ENCODE measurements at regions of chr1 and their contacts with region 1.

Region 1: GRCh38 chr1:160251687-160252526 is 10.4 kb downstream of the DCAF8 start:
- DNase-seq: peak; percentile 17 to 76 (median 57)
- ATAC-seq: peak; percentile 99
- H3K4me3 ChIP-seq: no peak overlapping the region
- H3K4me3 Mint-ChIP-seq: no peak overlapping the region
- H3K27ac ChIP-seq: no peak overlapping the region
- H3K27ac Mint-ChIP-seq: peak overlapping the region; percentile 80
- H3K4me1 ChIP-seq: no peaks in the 10 kb centered on the region
- H3K4me1 Mint-ChIP-seq: peaks cover 23% of the 10 kb centered on the region
- H3K27me3 ChIP-seq: no peaks in the 10 kb centered on the region
- H3K27me3 Mint-ChIP-seq: no peaks in the 10 kb centered on the region
- CTCF ChIP-seq: peak; percentile 64

Region 2: GRCh38 chr1:159936273-159936904 is 315.5 kb before region 1 on chr1:
- CTCF ChIA-PET with region 1: no interaction called
- POLR2A ChIA-PET with region 1: no interaction called
- intact Hi-C with region 1: loop called in 1 of 2 experiments (anchors 5 kb)
- DNase-seq: peak; percentile 66 to 90 (median 82)
- ATAC-seq: peak; percentile 96
- H3K4me3 ChIP-seq: no peak overlapping the region
- H3K4me3 Mint-ChIP-seq: no peak overlapping the region
- H3K27ac ChIP-seq: no peak overlapping the region
- H3K27ac Mint-ChIP-seq: no peak overlapping the region
- H3K4me1 ChIP-seq: peaks cover 4% of the 10 kb centered on the region
- H3K4me1 Mint-ChIP-seq: peaks cover 6% of the 10 kb centered on the region
- H3K27me3 ChIP-seq: no peaks in the 10 kb centered on the region
- H3K27me3 Mint-ChIP-seq: peaks cover 11% of the 10 kb centered on the region
- CTCF ChIP-seq: peak; percentile 97

Region 3: DNA sequence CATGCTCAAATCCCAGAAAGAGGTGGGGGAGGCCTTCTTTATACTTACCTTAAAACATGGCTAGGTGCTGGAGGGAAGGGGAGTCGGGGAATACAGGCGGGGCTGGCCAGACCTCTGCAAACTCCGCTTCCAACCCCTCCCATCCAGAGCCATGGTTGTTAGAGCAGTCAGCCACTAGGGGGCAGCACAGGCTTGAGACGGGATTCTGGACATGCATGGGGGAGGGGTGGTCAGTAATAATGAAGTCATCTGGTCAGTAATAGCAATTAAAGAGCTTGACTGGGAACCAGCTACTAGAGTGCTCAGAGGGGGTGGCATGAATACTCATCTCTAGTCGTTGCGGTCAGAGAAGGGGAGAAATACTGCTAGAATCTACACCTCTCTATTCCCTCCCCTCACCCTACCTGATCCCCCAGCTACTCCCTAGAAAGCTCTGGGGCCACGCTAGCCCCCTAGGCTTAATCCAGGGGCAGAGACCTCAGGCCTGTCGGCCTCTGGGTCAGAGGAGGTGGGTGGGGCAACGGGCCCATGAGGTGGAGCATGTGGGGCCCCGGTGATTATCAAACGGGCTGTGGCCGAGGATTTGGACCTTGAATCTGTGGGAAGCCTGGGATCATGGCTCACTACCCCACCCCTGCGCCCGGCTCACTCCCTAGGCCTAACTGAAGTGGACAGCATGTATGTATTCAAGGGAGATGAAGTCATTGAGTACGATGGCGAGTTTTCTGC is 58.7 kb before region 1 on chr1:
- CTCF ChIA-PET with region 1: interaction called, 37 read pairs
- POLR2A ChIA-PET with region 1: no interaction called
- intact Hi-C with region 1: loop called (anchors 1 kb)
- DNase-seq: peak; percentile 58 to 89 (median 81)
- ATAC-seq: peak; percentile 95
- H3K4me3 ChIP-seq: no peak overlapping the region
- H3K4me3 Mint-ChIP-seq: no peak overlapping the region
- H3K27ac ChIP-seq: no peak overlapping the region
- H3K27ac Mint-ChIP-seq: no peak overlapping the region
- H3K4me1 ChIP-seq: no peaks in the 10 kb centered on the region
- H3K4me1 Mint-ChIP-seq: no peaks in the 10 kb centered on the region
- H3K27me3 ChIP-seq: peaks cover 0 to 2% of the 10 kb centered on the region in 2 experiments
- H3K27me3 Mint-ChIP-seq: no peaks in the 10 kb centered on the region
- CTCF ChIP-seq: peak; percentile 83

Region 4: GRCh38 chr1:160205242-160206035 is 46.5 kb before region 1 on chr1 and contains the start of gene PEA15:
- CTCF ChIA-PET with region 1: interaction called, 6 read pairs
- POLR2A ChIA-PET with region 1: interaction called, 3 read pairs
- intact Hi-C with region 1: loop called in 1 of 2 experiments (anchors 5 kb)
- DNase-seq: peak; percentile 19 to 80 (median 66)
- ATAC-seq: peak; percentile 70
- H3K4me3 ChIP-seq: peak within 1 kb of the TSS; percentile 69 to 89
- H3K4me3 Mint-ChIP-seq: peak within 1 kb of the TSS; percentile 90
- H3K27ac ChIP-seq: peak within 1 kb of the TSS; percentile 57 to 83
- H3K27ac Mint-ChIP-seq: peak within 1 kb of the TSS; percentile 89
- H3K4me1 ChIP-seq: peaks cover 19% of the 10 kb centered on the region
- H3K4me1 Mint-ChIP-seq: peaks cover 36% of the 10 kb centered on the region
- H3K27me3 ChIP-seq: no peaks in the 10 kb centered on the region
- H3K27me3 Mint-ChIP-seq: no peaks in the 10 kb centered on the region
- CTCF ChIP-seq: no peak
- total RNA-seq, gene PEA15: 9.1 to 10.9 TPM

Region 5: DNA sequence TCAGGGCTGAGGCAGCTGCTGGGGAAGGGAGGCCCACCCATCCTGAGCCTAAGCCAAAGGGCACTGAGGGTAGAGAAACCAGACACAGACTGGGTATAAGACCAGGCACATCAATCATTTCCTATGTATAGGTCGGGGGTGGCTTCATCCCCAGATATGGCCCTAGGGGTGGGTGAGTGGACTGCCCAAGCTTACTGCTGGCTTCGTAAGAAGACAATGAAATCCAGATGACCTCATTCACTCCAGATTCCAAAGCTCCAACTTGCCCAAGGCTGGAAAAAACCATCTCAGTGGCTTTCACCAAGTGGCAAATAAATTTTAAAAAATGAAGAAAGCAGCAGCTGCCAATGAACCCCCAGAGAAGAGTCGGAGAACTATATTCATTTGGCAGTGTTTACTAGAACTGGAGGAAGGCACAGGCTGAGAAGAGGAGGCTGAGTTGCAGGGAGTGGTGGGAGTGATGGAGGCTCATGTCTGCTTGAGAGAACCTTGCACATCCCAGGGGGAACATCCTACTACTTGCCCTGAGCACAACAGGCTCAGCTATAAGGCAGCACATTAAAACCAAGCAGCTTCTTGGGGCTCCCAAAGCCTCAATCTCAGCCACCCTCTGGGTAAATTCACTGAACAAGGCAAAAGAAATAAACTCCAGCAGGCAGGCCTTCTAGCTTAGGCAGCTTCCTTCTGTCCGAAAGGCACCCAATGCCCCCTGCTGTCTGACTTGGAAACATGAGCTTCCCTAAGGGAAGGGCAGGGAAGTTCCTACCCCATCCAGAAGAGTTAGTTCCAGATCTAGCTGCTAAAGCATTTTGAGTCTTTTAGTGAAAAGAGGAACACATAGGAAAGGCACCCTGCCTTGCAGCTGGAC is 32.6 kb before region 1 on chr1:
- CTCF ChIA-PET with region 1: interaction called, 14 read pairs
- POLR2A ChIA-PET with region 1: interaction called, 3 read pairs
- intact Hi-C with region 1: no loop called
- DNase-seq: peak in 1 of 9 experiments; percentile 24
- ATAC-seq: no peak
- H3K4me3 ChIP-seq: no peak overlapping the region
- H3K4me3 Mint-ChIP-seq: no peak overlapping the region
- H3K27ac ChIP-seq: no peak overlapping the region
- H3K27ac Mint-ChIP-seq: no peak overlapping the region
- H3K4me1 ChIP-seq: no peaks in the 10 kb centered on the region
- H3K4me1 Mint-ChIP-seq: no peaks in the 10 kb centered on the region
- H3K27me3 ChIP-seq: no peaks in the 10 kb centered on the region
- H3K27me3 Mint-ChIP-seq: no peaks in the 10 kb centered on the region
- CTCF ChIP-seq: no peak

Region 6: GRCh38 chr1:160232911-160233310 is 19.0 kb before region 1 on chr1:
- CTCF ChIA-PET with region 1: interaction called, 11 read pairs
- POLR2A ChIA-PET with region 1: interaction called, 3 read pairs
- intact Hi-C with region 1: no loop called
- DNase-seq: peak in 1 of 9 experiments; percentile 19
- ATAC-seq: no peak
- H3K4me3 ChIP-seq: no peak overlapping the region
- H3K4me3 Mint-ChIP-seq: no peak overlapping the region
- H3K27ac ChIP-seq: no peak overlapping the region
- H3K27ac Mint-ChIP-seq: no peak overlapping the region
- H3K4me1 ChIP-seq: no peaks in the 10 kb centered on the region
- H3K4me1 Mint-ChIP-seq: peaks cover 13% of the 10 kb centered on the region
- H3K27me3 ChIP-seq: no peaks in the 10 kb centered on the region
- H3K27me3 Mint-ChIP-seq: no peaks in the 10 kb centered on the region
- CTCF ChIP-seq: no peak

Region 7: DNA sequence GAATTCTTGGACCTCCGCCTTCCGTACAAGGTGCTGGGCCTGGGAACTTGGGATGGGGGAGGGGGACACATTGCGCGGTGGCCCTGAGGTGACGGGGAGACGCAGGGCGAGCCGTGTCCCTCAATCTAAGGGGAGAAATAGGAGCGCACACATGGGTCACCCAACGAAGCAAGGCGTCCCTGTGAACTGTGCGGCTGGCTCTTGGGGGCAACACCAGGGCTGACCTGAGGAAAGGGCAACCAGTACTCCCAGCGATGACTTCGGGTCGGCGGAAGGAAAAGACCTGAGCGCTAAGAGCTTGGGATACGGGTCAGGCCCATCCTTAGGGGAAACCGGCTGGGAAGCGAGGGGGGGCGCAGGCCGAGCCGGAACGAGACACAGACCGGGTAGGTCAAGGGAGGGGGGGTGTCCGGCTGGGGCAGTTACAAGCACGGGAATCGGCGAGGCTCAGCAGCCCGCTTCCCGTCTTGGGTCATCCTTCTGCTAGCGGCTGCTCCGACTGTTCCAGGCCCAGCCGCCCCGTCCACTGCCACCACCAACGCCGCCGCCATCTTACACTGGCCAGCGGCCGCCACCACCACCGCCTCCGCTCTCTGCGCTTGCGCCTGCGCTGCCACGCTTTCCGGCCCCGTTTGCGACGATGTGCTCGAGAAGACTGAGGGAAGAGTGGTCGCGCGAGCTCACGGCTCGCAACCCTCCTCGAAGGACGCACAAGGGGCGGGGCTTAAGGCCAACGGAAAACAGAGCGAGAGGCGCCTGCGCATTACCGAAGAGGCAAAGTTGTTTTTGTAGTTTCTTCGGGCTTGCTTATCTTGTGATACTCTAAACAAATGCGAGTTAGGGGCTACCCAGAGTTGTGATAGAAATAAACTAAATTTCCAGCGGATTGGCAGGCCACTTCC is 10.2 kb after region 1 on chr1 and contains the start of gene DCAF8:
- CTCF ChIA-PET with region 1: interaction called, 24 read pairs
- POLR2A ChIA-PET with region 1: interaction called, 17 read pairs
- intact Hi-C with region 1: no loop called
- DNase-seq: peak; percentile 97 to 99 (median 98)
- ATAC-seq: peak; percentile 87
- H3K4me3 ChIP-seq: peak within 1 kb of the TSS; percentile 91 to 99
- H3K4me3 Mint-ChIP-seq: peak within 1 kb of the TSS; percentile 96
- H3K27ac ChIP-seq: peak within 1 kb of the TSS; percentile 83 to 99
- H3K27ac Mint-ChIP-seq: peak within 1 kb of the TSS; percentile 98
- H3K4me1 ChIP-seq: peaks cover 31% of the 10 kb centered on the region
- H3K4me1 Mint-ChIP-seq: peaks cover 41% of the 10 kb centered on the region
- H3K27me3 ChIP-seq: no peaks in the 10 kb centered on the region
- H3K27me3 Mint-ChIP-seq: no peaks in the 10 kb centered on the region
- CTCF ChIP-seq: no peak
- total RNA-seq, gene DCAF8: 152 to 162 TPM

Measured in CD8-positive, alpha-beta T cell (primary cell).